GM12878 (cell line): ENCODE measurements at regions of chr17 and their contacts with region 1.

Region 1: GRCh38 chr17:56715613-56716357 is 117.9 kb downstream of the C17orf67 start:
- DNase-seq: peak; percentile 38
- ATAC-seq: peak; percentile 99
- H3K4me3 ChIP-seq: no peak overlapping the region
- H3K27ac ChIP-seq: no peak overlapping the region
- H3K4me1 ChIP-seq: no peaks in the 10 kb centered on the region
- H3K27me3 ChIP-seq: no peaks in the 10 kb centered on the region; a peak in 2 of 4 replicates
- CTCF ChIP-seq: peak; percentile 76 to 82 (median 78)
- EP300 ChIP-seq: no peak
- POLR2A ChIP-seq: no peak
- RAD21 ChIP-seq: peak; percentile 81

Region 2: DNA sequence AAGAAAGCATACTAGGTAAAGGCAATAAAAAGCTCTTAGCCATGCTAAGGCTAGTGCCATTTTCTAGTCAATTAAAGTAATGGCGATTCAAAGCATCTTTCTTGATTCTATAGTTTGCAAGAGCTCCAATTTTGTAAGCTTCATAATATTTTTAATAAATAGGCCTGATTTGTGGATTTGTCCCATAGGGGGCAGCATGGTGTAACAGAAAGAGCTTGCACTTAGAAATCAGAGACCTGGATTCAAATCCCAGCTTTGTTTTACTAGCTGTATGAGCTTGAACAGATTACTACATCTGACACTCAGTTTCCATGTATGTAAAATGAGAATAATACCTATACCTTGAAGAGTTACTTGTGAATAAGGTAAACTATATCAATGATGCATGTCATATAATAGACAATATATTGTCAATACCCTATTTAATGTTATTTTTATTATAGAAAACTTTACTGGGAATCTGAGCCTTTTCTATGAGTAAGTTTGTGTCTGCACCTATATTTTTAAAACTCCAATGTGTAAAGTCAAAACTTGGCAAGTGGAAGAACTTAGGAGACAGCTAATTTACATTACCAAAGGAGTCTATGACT is 215.9 kb before region 1 on chr17:
- CTCF ChIA-PET with region 1: interaction called, 34 read pairs
- POLR2A ChIA-PET with region 1: no interaction called
- RAD21 ChIA-PET with region 1: interaction called, 19 read pairs
- SMC1A ChIA-PET with region 1: interaction called, 19 read pairs
- in situ Hi-C with region 1: no loop called
- intact Hi-C with region 1: loop called (anchors 2 kb)
- DNase-seq: no peak
- ATAC-seq: no peak
- H3K4me3 ChIP-seq: no peak overlapping the region
- H3K27ac ChIP-seq: no peak overlapping the region
- H3K4me1 ChIP-seq: no peaks in the 10 kb centered on the region
- H3K27me3 ChIP-seq: 0 out of 4 replicates have a peak, but pooled peaks cover 0 to 4% of the 10 kb centered on the region in 2 experiments
- CTCF ChIP-seq: peak in 1 of 3 experiments; percentile 26; a peak in 1 of 6 replicates
- EP300 ChIP-seq: no peak
- POLR2A ChIP-seq: no peak
- RAD21 ChIP-seq: peak; percentile 42; the same call in 1 of the 2 replicates

Region 3: GRCh38 chr17:56592487-56593085 is 123.2 kb before region 1 on chr17:
- CTCF ChIA-PET with region 1: interaction called, 57 read pairs
- POLR2A ChIA-PET with region 1: no interaction called
- RAD21 ChIA-PET with region 1: interaction called, 9 read pairs
- SMC1A ChIA-PET with region 1: interaction called, 16 read pairs
- in situ Hi-C with region 1: no loop called
- intact Hi-C with region 1: loop called (anchors 1 kb)
- DNase-seq: no peak
- ATAC-seq: peak; percentile 94
- H3K4me3 ChIP-seq: no peak overlapping the region
- H3K27ac ChIP-seq: no peak overlapping the region
- H3K4me1 ChIP-seq: no peaks in the 10 kb centered on the region
- H3K27me3 ChIP-seq: peaks cover 14 to 16% of the 10 kb centered on the region in 2 experiments
- CTCF ChIP-seq: peak; percentile 70 to 88 (median 82); a peak in 5 of 6 replicates
- EP300 ChIP-seq: no peak
- POLR2A ChIP-seq: no peak
- RAD21 ChIP-seq: peak; percentile 78

Region 4: GRCh38 chr17:56727876-56728620 is 12.3 kb after region 1 on chr17:
- CTCF ChIA-PET with region 1: interaction called, 13 read pairs
- POLR2A ChIA-PET with region 1: no interaction called
- RAD21 ChIA-PET with region 1: interaction called, 3 read pairs
- SMC1A ChIA-PET with region 1: interaction called, 3 read pairs
- in situ Hi-C with region 1: no loop called
- intact Hi-C with region 1: no loop called
- DNase-seq: no peak
- ATAC-seq: no peak
- H3K4me3 ChIP-seq: no peak overlapping the region
- H3K27ac ChIP-seq: no peak overlapping the region
- H3K4me1 ChIP-seq: no peaks in the 10 kb centered on the region
- H3K27me3 ChIP-seq: peaks cover 2 to 4% of the 10 kb centered on the region in 2 experiments; a peak in 2 of 4 replicates
- CTCF ChIP-seq: no peak
- EP300 ChIP-seq: no peak
- POLR2A ChIP-seq: no peak
- RAD21 ChIP-seq: no peak

Region 5: DNA sequence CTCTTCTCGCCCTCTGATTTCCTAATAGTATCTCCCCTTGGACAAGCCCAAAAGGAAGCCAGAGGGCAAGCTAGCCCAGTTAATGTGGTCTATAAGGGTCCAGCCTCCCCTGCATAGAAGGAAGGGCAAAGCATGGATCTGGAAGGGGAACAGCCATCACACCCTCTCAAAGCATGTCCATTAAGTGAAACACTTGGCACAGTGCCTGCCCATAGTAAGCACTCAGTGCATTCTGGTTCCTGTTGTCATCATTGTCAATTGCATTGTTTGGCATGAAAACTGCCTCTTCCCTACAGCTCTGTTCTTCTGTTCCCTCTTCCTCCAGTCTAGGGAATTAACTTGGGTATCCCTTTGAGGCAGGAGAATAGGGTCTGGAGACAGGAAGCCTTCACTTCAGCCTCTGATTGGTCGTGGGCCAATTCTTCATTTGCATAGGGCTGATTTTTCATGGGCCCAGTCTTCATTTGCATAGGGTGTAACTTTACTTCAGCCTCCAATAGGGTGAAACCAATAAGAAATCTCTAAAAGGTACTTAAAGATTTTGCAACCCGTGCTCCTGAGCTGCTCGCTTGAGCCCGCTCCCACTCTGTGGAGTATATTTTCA is 36.6 kb after region 1 on chr17:
- CTCF ChIA-PET with region 1: no interaction called
- POLR2A ChIA-PET with region 1: no interaction called
- RAD21 ChIA-PET with region 1: no interaction called
- SMC1A ChIA-PET with region 1: no interaction called
- in situ Hi-C with region 1: no loop called
- intact Hi-C with region 1: no loop called
- DNase-seq: no peak
- ATAC-seq: no peak
- H3K4me3 ChIP-seq: no peak overlapping the region
- H3K27ac ChIP-seq: no peak overlapping the region
- H3K4me1 ChIP-seq: no peaks in the 10 kb centered on the region; the same call in 1 of the 2 replicates
- H3K27me3 ChIP-seq: peaks cover 0 to 7% of the 10 kb centered on the region in 2 experiments; a peak in 2 of 4 replicates
- CTCF ChIP-seq: no peak
- EP300 ChIP-seq: no peak
- POLR2A ChIP-seq: no peak
- RAD21 ChIP-seq: no peak

Region 6: GRCh38 chr17:56779898-56780733 is 64.3 kb after region 1 on chr17:
- CTCF ChIA-PET with region 1: interaction called, 38 read pairs
- POLR2A ChIA-PET with region 1: no interaction called
- RAD21 ChIA-PET with region 1: interaction called, 8 read pairs
- SMC1A ChIA-PET with region 1: interaction called, 14 read pairs
- in situ Hi-C with region 1: no loop called
- intact Hi-C with region 1: loop called (anchors 2 kb)
- DNase-seq: no peak
- ATAC-seq: peak; percentile 99
- H3K4me3 ChIP-seq: peak overlapping the region; percentile 39; the same call in 1 of the 2 replicates
- H3K27ac ChIP-seq: no peak overlapping the region
- H3K4me1 ChIP-seq: no peaks in the 10 kb centered on the region; the same call in 1 of the 2 replicates
- H3K27me3 ChIP-seq: peaks cover 2% of the 10 kb centered on the region in 2 experiments; a peak in 1 of 4 replicates
- CTCF ChIP-seq: peak; percentile 94 to 97 (median 95)
- EP300 ChIP-seq: no peak
- POLR2A ChIP-seq: no peak
- RAD21 ChIP-seq: peak; percentile 67

Region 7: DNA sequence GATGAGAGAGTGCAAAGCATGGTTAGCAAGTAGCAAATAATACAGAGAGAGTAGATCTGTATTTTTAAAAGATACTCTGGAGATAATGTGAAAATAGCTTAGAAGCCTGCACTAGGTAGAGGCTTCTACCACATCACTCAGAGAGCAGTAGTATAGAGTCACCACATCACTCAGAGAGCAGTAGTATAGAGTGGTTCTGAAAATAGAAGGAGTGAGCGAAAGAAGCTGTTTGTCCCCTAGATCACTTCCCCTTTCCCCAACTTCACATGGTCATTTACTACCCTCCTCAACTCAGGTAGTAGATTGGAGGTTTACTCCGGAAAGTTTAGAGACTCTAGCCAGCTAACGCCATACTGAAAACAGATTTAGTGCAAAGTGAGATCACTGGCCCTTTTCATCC is 135.2 kb after region 1 on chr17:
- CTCF ChIA-PET with region 1: no interaction called
- POLR2A ChIA-PET with region 1: no interaction called
- RAD21 ChIA-PET with region 1: no interaction called
- SMC1A ChIA-PET with region 1: no interaction called
- in situ Hi-C with region 1: no loop called
- intact Hi-C with region 1: no loop called
- DNase-seq: no peak
- ATAC-seq: peak; percentile 70
- H3K4me3 ChIP-seq: no peak overlapping the region
- H3K27ac ChIP-seq: no peak overlapping the region
- H3K4me1 ChIP-seq: peaks cover 8% of the 10 kb centered on the region
- H3K27me3 ChIP-seq: no peaks in the 10 kb centered on the region
- CTCF ChIP-seq: no peak
- EP300 ChIP-seq: no peak
- POLR2A ChIP-seq: no peak
- RAD21 ChIP-seq: no peak

Region 8: DNA sequence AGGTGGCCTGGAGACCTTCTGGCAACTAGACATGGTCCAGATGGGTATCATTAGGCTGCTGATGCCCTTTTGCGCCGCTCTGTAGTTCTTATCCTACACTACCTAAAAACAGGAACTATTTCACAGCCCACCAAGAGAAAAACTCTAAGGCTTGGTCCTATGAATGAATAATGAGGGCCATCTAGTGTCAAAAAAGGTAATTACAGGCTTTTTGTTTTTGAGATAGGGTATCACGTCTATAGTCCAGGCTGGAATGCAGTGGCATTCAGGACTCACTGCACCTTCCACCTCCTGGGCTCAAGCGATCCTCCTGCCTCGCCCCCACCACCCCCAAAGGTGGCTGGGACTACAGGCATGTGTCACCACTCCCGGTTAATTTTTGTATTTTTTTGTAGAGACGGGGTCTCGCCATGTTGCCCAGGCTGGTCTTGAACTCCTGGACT is 224.1 kb after region 1 on chr17:
- CTCF ChIA-PET with region 1: interaction called, 6 read pairs
- POLR2A ChIA-PET with region 1: no interaction called
- RAD21 ChIA-PET with region 1: no interaction called
- SMC1A ChIA-PET with region 1: no interaction called
- in situ Hi-C with region 1: no loop called
- intact Hi-C with region 1: loop called (anchors 10 kb)
- DNase-seq: no peak
- ATAC-seq: peak; percentile 95
- H3K4me3 ChIP-seq: no peak overlapping the region
- H3K27ac ChIP-seq: no peak overlapping the region
- H3K4me1 ChIP-seq: no peaks in the 10 kb centered on the region
- H3K27me3 ChIP-seq: no peaks in the 10 kb centered on the region
- CTCF ChIP-seq: peak; percentile 69 to 75 (median 74)
- EP300 ChIP-seq: no peak
- POLR2A ChIP-seq: no peak
- RAD21 ChIP-seq: peak; percentile 92